CD4-positive, alpha-beta memory T cell (primary cell): ENCODE measurements at regions of chr1 and their contacts with region 1.

Region 1: DNA sequence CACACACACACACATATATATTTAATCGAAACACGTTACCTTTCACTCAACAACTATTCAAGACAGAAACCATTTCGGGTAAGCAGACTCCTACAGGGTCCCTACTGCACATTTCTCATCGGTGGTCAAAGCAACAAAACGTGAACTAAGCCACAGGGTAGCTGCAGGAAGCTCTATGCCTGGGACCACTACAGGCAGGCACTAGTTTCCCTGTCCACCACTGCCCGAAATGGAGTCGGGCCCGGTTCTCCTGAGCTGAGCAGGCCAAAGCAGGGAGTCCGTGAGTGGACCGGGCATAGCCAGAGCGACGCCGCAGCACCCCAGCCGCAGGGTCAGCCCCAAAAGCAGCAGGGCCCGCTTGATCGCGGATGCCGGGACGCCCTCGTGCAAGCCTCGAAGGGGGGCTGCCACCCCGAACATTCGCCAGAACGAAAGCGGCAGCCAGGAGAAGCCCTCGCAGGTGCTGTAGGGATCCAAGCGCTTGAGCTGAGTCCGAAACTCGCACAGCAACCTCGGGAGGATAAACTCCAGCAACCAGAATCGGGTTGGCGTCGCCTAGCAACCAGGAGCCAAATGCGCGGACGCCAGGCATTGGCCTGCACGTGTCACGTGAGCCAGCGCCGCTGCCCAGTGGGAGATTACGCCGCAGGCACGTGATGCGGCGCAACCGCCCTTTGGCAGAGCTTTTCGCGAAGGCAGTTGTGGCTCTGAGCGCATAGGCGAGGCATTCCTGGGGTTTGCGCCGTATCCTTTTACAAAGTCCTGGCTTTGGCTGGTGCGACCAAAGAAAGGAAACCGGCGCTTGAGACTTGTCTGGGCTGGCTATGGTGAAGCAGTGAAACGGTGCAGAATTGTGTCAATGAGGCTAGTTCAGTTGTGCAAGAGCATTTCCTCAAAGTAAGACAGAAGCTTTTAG is 13.9 kb upstream of the DDI2 start:
- DNase-seq: peak; percentile 90 to 95 (median 92)
- H3K4me3 ChIP-seq: peak overlapping the region; percentile 38 to 95
- H3K4me3 Mint-ChIP-seq: peak overlapping the region; percentile 65 to 86 (median 83)
- H3K27ac ChIP-seq: peak overlapping the region; percentile 61
- H3K27ac Mint-ChIP-seq: peak overlapping the region; percentile 63 to 91 (median 88)
- H3K4me1 ChIP-seq: peaks cover 11% of the 10 kb centered on the region
- H3K4me1 Mint-ChIP-seq: peaks cover 5 to 17% (median 10%) of the 10 kb centered on the region in 4 donors
- H3K27me3 ChIP-seq: no peaks in the 10 kb centered on the region
- H3K27me3 Mint-ChIP-seq: no peaks in the 10 kb centered on the region

Region 2: GRCh38 chr1:15578921-15579682 is 24.2 kb before region 1 on chr1:
- CTCF ChIA-PET with region 1: interaction called, 4 read pairs
- POLR2A ChIA-PET with region 1: interaction called, 37 read pairs
- intact Hi-C with region 1: loop called (anchors 2 kb)
- DNase-seq: peak in 4 of 5 donors; percentile 52 to 65 (median 56)
- H3K4me3 ChIP-seq: peak overlapping the region in 1 of 2 donors; percentile 47
- H3K4me3 Mint-ChIP-seq: peak overlapping the region; percentile 21 to 82 (median 64)
- H3K27ac ChIP-seq: peak overlapping the region; percentile 44
- H3K27ac Mint-ChIP-seq: peak overlapping the region; percentile 91 to 96 (median 95)
- H3K4me1 ChIP-seq: peaks cover 50% of the 10 kb centered on the region
- H3K4me1 Mint-ChIP-seq: peaks cover 28 to 63% (median 49%) of the 10 kb centered on the region in 4 donors
- H3K27me3 ChIP-seq: no peaks in the 10 kb centered on the region
- H3K27me3 Mint-ChIP-seq: no peaks in the 10 kb centered on the region

Region 3: GRCh38 chr1:15617175-15617880 is 14.0 kb after region 1 on chr1 and contains the start of gene DDI2:
- CTCF ChIA-PET with region 1: interaction called, 3 read pairs
- POLR2A ChIA-PET with region 1: interaction called, 43 read pairs
- intact Hi-C with region 1: loop called (anchors 1 kb)
- DNase-seq: peak; percentile 91 to 97 (median 93)
- H3K4me3 ChIP-seq: peak within 1 kb of the TSS; percentile 68 to 93
- H3K4me3 Mint-ChIP-seq: peak within 1 kb of the TSS; percentile 92 to 94 (median 93)
- H3K27ac ChIP-seq: peak within 1 kb of the TSS; percentile 86
- H3K27ac Mint-ChIP-seq: peak within 1 kb of the TSS; percentile 76 to 98 (median 96)
- H3K4me1 ChIP-seq: peaks cover 50% of the 10 kb centered on the region
- H3K4me1 Mint-ChIP-seq: peaks cover 27 to 55% (median 41%) of the 10 kb centered on the region in 4 donors
- H3K27me3 ChIP-seq: no peaks in the 10 kb centered on the region
- H3K27me3 Mint-ChIP-seq: no peaks in the 10 kb centered on the region
- total RNA-seq, gene DDI2: 46.2 to 47.6 TPM

Region 4: GRCh38 chr1:15741183-15741850 is 138.0 kb after region 1 on chr1:
- CTCF ChIA-PET with region 1: interaction called, 20 read pairs
- POLR2A ChIA-PET with region 1: no interaction called
- intact Hi-C with region 1: no loop called
- DNase-seq: peak in 4 of 5 donors; percentile 55 to 60 (median 58)
- H3K4me3 ChIP-seq: no peak overlapping the region
- H3K4me3 Mint-ChIP-seq: no peak overlapping the region
- H3K27ac ChIP-seq: no peak overlapping the region
- H3K27ac Mint-ChIP-seq: peak overlapping the region in 3 of 7 donors; percentile 19 to 72 (median 68)
- H3K4me1 ChIP-seq: peaks cover 7% of the 10 kb centered on the region
- H3K4me1 Mint-ChIP-seq: peaks cover 5 to 6% (median 6%) of the 10 kb centered on the region in 4 donors
- H3K27me3 ChIP-seq: no peaks in the 10 kb centered on the region
- H3K27me3 Mint-ChIP-seq: no peaks in the 10 kb centered on the region

Region 5: GRCh38 chr1:16055613-16056520 is 452.6 kb after region 1 on chr1:
- CTCF ChIA-PET with region 1: no interaction called
- POLR2A ChIA-PET with region 1: no interaction called
- intact Hi-C with region 1: loop called (anchors 5 kb)
- DNase-seq: peak; percentile 69 to 85 (median 78)
- H3K4me3 ChIP-seq: no peak overlapping the region
- H3K4me3 Mint-ChIP-seq: peak overlapping the region in 2 of 8 donors; percentile 11 to 43
- H3K27ac ChIP-seq: no peak overlapping the region
- H3K27ac Mint-ChIP-seq: peak overlapping the region in 2 of 7 donors; percentile 52 to 57
- H3K4me1 ChIP-seq: peaks cover 3% of the 10 kb centered on the region
- H3K4me1 Mint-ChIP-seq: peaks cover 4 to 7% (median 6%) of the 10 kb centered on the region in 4 donors
- H3K27me3 ChIP-seq: no peaks in the 10 kb centered on the region
- H3K27me3 Mint-ChIP-seq: peaks cover 2 to 5% of the 10 kb centered on the region in 2 donors

Region 6: DNA sequence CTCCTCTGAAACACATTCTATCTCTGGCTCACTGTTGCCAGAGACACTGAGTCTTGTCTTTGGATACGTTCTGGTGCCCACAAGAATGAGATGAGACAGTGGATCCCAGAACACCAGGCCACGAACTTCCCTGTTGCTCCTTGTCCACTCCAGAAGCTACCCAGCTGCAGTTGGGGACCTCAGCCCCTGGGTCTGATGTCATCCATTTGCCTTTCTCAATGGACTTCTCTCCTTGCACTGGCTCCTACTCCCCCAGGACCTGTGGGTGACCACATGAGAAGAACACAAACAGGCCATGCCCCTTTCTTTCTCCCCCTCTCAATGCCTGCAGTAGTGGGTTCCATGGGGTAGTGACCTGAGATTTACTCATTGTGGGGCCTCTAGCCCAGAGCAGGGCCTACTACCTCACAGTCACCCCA is 1004.1 kb after region 1 on chr1:
- CTCF ChIA-PET with region 1: no interaction called
- POLR2A ChIA-PET with region 1: no interaction called
- intact Hi-C with region 1: no loop called
- DNase-seq: peak in 2 of 5 donors; percentile 3 to 32
- H3K4me3 ChIP-seq: no peak overlapping the region
- H3K4me3 Mint-ChIP-seq: no peak overlapping the region
- H3K27ac ChIP-seq: no peak overlapping the region
- H3K27ac Mint-ChIP-seq: no peak overlapping the region
- H3K4me1 ChIP-seq: peaks cover 9% of the 10 kb centered on the region
- H3K4me1 Mint-ChIP-seq: no peaks in the 10 kb centered on the region
- H3K27me3 ChIP-seq: no peaks in the 10 kb centered on the region
- H3K27me3 Mint-ChIP-seq: no peaks in the 10 kb centered on the region